Ovary (tissue), 10 donors: ENCODE measurements at regions of chr2 and their contacts with region 1.

Region 1: GRCh38 chr2:103235283-103235682 is 473.5 kb downstream of the TMEM182 start:
- DNase-seq: no peak
- H3K4me3 ChIP-seq: no peak overlapping the region
- H3K27ac ChIP-seq: no peak overlapping the region
- H3K4me1 ChIP-seq: no peaks in the 10 kb centered on the region
- H3K27me3 ChIP-seq: no peaks in the 10 kb centered on the region
- CTCF ChIP-seq: no peak
- EP300 ChIP-seq: no peak
- POLR2A ChIP-seq: no peak

Region 2: DNA sequence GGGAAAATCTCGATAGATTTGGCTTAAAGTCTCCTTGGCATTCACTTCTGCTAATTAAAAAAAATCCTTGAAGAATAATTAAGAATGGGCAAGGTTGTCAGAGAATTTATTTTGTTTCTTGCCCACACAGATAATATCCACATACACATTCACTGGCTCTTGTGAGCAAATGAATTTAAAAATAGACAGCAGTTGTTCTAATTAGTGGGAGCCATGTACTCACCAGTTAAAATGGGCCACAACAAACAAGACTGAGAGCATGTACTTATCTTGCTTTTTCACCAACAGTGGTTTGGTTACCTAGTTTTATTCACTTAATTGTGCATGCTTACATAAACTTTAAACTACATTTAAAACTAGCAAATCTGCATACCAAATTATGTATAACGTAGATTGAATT is 420.0 kb before region 1 on chr2:
- intact Hi-C with region 1: loop called in 1 of 4 experiments (anchors 5 kb)
- DNase-seq: no peak
- H3K4me3 ChIP-seq: no peak overlapping the region
- H3K27ac ChIP-seq: no peak overlapping the region
- H3K4me1 ChIP-seq: no peaks in the 10 kb centered on the region
- H3K27me3 ChIP-seq: no peaks in the 10 kb centered on the region
- CTCF ChIP-seq: no peak
- EP300 ChIP-seq: no peak
- POLR2A ChIP-seq: no peak

Region 3: GRCh38 chr2:103132536-103133217 is 102.6 kb before region 1 on chr2:
- intact Hi-C with region 1: no loop called
- DNase-seq: no peak
- H3K4me3 ChIP-seq: no peak overlapping the region
- H3K27ac ChIP-seq: no peak overlapping the region
- H3K4me1 ChIP-seq: no peaks in the 10 kb centered on the region
- H3K27me3 ChIP-seq: peaks cover 4% of the 10 kb centered on the region
- CTCF ChIP-seq: no peak
- EP300 ChIP-seq: no peak
- POLR2A ChIP-seq: no peak